BJ (cell line): ENCODE measurements at regions of chr21 and their contacts with region 1.

Region 1: GRCh38 chr21:32412162-32413014 is at the start of gene EVA1C:
- DNase-seq: no peak
- H3K4me3 ChIP-seq: peak within 1 kb of the TSS; percentile 70
- H3K27me3 ChIP-seq: no peaks in the 10 kb centered on the region
- CTCF ChIP-seq: no peak
- polyA plus RNA-seq, gene EVA1C: 9.6 and 12.2 TPM in 2 replicates

Region 2: GRCh38 chr21:32569261-32570230 is 157.2 kb after region 1 on chr21:
- CTCF ChIA-PET with region 1: interaction called, 23 read pairs
- POLR2A ChIA-PET with region 1: no interaction called
- DNase-seq: no peak
- H3K4me3 ChIP-seq: peak overlapping the region; percentile 55
- H3K27me3 ChIP-seq: no peaks in the 10 kb centered on the region; the same call in 1 of the 2 replicates
- CTCF ChIP-seq: peak; percentile 91